GM10248 (cell line): ENCODE measurements at regions of chr5 and their contacts with region 1.

Region 1: GRCh38 chr5:132272311-132273210 is 15.1 kb downstream of the PDLIM4 start:
- DNase-seq: peak; percentile 70
- CTCF ChIP-seq: peak; percentile 71

Region 2: GRCh38 chr5:132260714-132261551 is 11.6 kb before region 1 on chr5:
- CTCF ChIA-PET with region 1: interaction called, 26 read pairs
- POLR2A ChIA-PET with region 1: no interaction called
- DNase-seq: peak; percentile 46
- CTCF ChIP-seq: no peak

Region 3: GRCh38 chr5:132293066-132293991 is 20.8 kb after region 1 on chr5:
- CTCF ChIA-PET with region 1: interaction called, 34 read pairs
- POLR2A ChIA-PET with region 1: no interaction called
- DNase-seq: peak; percentile 77
- CTCF ChIP-seq: no peak

Region 4: GRCh38 chr5:132301344-132302271 is 29.0 kb after region 1 on chr5:
- CTCF ChIA-PET with region 1: interaction called, 11 read pairs
- POLR2A ChIA-PET with region 1: no interaction called
- DNase-seq: no peak
- CTCF ChIP-seq: no peak

Region 5: DNA sequence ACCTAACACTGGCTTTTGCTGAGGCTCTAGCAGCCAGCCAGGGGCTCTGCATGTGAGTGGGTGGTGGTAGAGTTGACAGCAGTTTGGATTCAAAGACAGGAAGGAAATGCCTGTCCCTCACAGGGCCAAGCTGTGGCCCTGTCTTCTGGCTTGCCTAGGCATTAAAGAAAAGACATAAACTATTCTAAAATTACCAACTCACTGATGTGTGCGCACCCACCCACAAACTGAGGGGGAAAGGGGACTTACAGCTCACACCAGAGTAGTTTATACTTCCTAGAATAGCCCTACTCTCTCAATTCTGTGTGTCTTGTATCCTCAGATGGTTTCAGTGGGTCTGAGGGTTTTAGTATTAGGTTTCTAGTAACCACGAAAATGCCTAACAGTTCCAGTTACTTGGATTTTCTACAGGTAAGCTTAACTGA is 367.2 kb after region 1 on chr5:
- CTCF ChIA-PET with region 1: no interaction called
- POLR2A ChIA-PET with region 1: no interaction called
- DNase-seq: peak; percentile 37
- CTCF ChIP-seq: no peak